ENCODE measurements at regions of chr11 and their contacts with region 1.

Region 1: DNA sequence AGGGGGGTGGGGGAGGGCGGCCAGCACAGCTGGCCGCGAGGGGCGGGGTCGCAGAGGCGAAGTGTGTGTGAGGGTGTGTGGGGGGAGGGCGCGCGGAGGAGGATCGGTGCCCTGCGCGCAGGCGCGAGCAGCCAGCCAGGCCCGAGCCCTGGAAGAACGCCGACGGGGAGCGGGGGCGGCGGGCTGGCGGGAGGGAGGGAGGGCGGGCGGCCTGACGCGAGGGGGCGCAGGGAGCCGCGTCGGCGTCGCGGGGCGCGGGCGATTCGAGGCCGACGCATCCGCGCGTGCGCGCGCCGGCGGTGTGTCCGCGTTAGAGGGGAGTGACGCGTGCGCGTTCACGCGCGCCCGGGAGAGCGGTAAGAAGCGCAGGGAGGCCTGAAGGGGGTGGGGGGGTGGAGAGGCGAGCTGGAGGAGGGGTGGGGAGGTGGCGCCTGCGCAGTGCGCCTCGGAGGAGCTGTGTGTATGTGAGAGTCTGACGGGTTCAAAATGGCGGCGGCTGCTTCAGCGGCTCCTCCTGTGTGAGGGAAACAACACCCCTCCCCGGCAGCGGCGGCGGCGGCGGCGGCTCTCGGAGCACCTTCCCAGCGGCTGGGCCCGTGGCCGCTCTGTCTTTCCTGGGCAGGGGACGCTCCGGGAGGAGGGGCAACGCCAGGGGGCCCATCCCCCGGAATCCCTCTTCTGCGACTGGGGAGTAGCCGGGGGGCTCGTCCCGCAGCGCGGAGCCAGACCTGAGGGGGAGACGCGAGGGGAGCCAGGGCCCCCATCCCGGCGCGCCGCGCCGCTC is at the start of gene KDM2A:
- DNase-seq: peak; percentile 98
- H3K4me3 ChIP-seq: peak within 1 kb of the TSS; percentile 83 to 96 (median 96)
- H3K27ac ChIP-seq: peak within 1 kb of the TSS; percentile 86
- H3K4me1 ChIP-seq: peaks cover 21% of the 10 kb centered on the region
- H3K27me3 ChIP-seq: no peaks in the 10 kb centered on the region
- CTCF ChIP-seq: no peak
- POLR2A ChIP-seq: peak; percentile 71
- total RNA-seq, gene KDM2A: 69.9 and 79.5 TPM in 2 replicates

Region 2: GRCh38 chr11:67082035-67082791 is 36.8 kb before region 1 on chr11:
- CTCF ChIA-PET with region 1: interaction called, 11 read pairs
- POLR2A ChIA-PET with region 1: no interaction called
- dilution Hi-C with region 1: no loop called
- intact Hi-C with region 1: loop called (anchors 2 kb)
- DNase-seq: peak; percentile 30
- H3K4me3 ChIP-seq: no peak overlapping the region
- H3K27ac ChIP-seq: no peak overlapping the region
- H3K4me1 ChIP-seq: no peaks in the 10 kb centered on the region
- H3K27me3 ChIP-seq: no peaks in the 10 kb centered on the region
- CTCF ChIP-seq: peak in 1 of 2 donors; percentile 18
- POLR2A ChIP-seq: no peak

Region 3: DNA sequence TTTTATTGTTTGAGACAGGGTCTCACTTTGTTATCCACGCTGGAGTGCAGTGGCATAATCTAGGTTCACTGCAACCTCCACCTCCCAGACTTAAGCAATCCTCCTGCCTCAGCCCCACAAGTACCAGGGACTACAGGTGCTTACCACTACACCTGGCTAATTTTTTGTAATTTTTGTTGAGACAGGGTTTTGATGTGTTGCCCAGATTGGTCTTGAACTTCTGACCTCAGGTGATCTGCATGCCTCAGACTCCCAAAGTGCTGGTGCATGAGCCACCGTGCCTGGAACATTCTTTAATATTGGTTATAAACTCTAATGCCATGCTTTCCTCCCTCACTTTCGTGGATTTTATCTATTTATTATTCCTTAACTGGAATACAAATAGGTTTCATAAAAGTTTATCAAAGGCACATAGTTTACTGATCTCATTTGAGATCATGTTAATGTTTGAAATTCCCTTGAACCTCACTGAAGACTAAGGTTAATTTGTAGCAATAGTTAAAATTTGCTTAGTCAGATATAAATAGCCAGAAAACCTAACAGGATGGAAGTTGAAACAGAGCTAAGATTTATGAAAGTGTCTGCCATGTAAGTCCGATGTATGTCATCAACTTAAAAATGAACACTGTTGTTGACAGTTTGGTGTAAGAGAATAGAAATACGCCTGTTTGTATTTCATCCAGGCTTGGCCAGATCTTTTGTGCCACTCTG is 27.7 kb after region 1 on chr11:
- CTCF ChIA-PET with region 1: interaction called, 3 read pairs
- POLR2A ChIA-PET with region 1: interaction called, 3 read pairs
- dilution Hi-C with region 1: no loop called
- intact Hi-C with region 1: loop called (anchors 1 kb)
- DNase-seq: no peak
- H3K4me3 ChIP-seq: no peak overlapping the region
- H3K27ac ChIP-seq: peak overlapping the region; percentile 93
- H3K4me1 ChIP-seq: peaks cover 14% of the 10 kb centered on the region
- H3K27me3 ChIP-seq: no peaks in the 10 kb centered on the region
- CTCF ChIP-seq: no peak
- POLR2A ChIP-seq: no peak

Region 4: DNA sequence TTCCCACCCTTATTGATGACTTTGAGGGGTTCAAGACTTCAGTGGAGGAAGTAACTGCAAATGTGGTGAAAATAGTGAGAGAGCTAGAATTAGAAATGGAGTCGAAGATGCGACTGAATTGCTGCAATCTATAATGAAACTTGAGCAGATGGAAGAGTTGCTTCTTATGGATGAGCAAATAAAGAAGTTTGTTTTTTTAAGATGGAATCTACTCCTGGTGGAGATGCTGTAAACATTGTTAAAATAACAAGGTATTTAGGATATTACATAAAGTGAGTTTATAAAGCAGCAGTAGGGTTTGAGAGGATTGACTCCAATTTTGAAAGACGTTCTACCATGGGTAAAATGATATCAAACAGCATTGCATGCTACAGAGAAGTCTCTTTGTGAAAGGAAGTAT is 83.1 kb after region 1 on chr11:
- CTCF ChIA-PET with region 1: no interaction called
- POLR2A ChIA-PET with region 1: no interaction called
- dilution Hi-C with region 1: no loop called
- intact Hi-C with region 1: no loop called
- DNase-seq: no peak
- H3K4me3 ChIP-seq: no peak overlapping the region
- H3K27ac ChIP-seq: no peak overlapping the region
- H3K4me1 ChIP-seq: no peaks in the 10 kb centered on the region
- H3K27me3 ChIP-seq: no peaks in the 10 kb centered on the region
- CTCF ChIP-seq: no peak
- POLR2A ChIP-seq: no peak

Measured in endothelial cell of umbilical vein (primary cell).